GM12878 (cell line): ENCODE measurements at regions of chr5 and their contacts with region 1.

Region 1: GRCh38 chr5:171323806-171324633 is 15.0 kb downstream of the TLX3 start:
- DNase-seq: no peak
- ATAC-seq: no peak; the same call in 2 of the 3 replicates
- H3K4me3 ChIP-seq: no peak overlapping the region
- H3K27ac ChIP-seq: no peak overlapping the region
- H3K4me1 ChIP-seq: no peaks in the 10 kb centered on the region
- H3K27me3 ChIP-seq: peaks cover 0 to 7% of the 10 kb centered on the region in 2 experiments; a peak in 2 of 4 replicates
- CTCF ChIP-seq: no peak
- EP300 ChIP-seq: no peak
- POLR2A ChIP-seq: no peak
- RAD21 ChIP-seq: no peak

Region 2: GRCh38 chr5:171365351-171365750 is 41.3 kb after region 1 on chr5:
- CTCF ChIA-PET with region 1: no interaction called
- POLR2A ChIA-PET with region 1: no interaction called
- RAD21 ChIA-PET with region 1: no interaction called
- SMC1A ChIA-PET with region 1: no interaction called
- in situ Hi-C with region 1: no loop called
- intact Hi-C with region 1: loop called (anchors 1 kb)
- DNase-seq: no peak
- ATAC-seq: 0 out of 3 replicates have a peak, but pooled peaks have one; percentile 34
- H3K4me3 ChIP-seq: no peak overlapping the region
- H3K27ac ChIP-seq: no peak overlapping the region
- H3K4me1 ChIP-seq: peaks cover 15% of the 10 kb centered on the region
- H3K27me3 ChIP-seq: no peaks in the 10 kb centered on the region
- CTCF ChIP-seq: peak; percentile 24 to 47 (median 44); a peak in 5 of 6 replicates
- EP300 ChIP-seq: no peak
- POLR2A ChIP-seq: no peak
- RAD21 ChIP-seq: peak; percentile 35; the same call in 1 of the 2 replicates

Region 3: GRCh38 chr5:171387970-171388815 is 64.2 kb after region 1 on chr5:
- CTCF ChIA-PET with region 1: no interaction called
- POLR2A ChIA-PET with region 1: no interaction called
- RAD21 ChIA-PET with region 1: no interaction called
- SMC1A ChIA-PET with region 1: no interaction called
- in situ Hi-C with region 1: no loop called
- intact Hi-C with region 1: no loop called
- DNase-seq: peak; percentile 59
- ATAC-seq: peak; percentile 71
- H3K4me3 ChIP-seq: peak overlapping the region; percentile 92
- H3K27ac ChIP-seq: peak overlapping the region; percentile 87
- H3K4me1 ChIP-seq: peaks cover 5% of the 10 kb centered on the region
- H3K27me3 ChIP-seq: no peaks in the 10 kb centered on the region
- CTCF ChIP-seq: no peak
- EP300 ChIP-seq: 0 out of 4 replicates have a peak, but pooled peaks have one; percentile 24 to 44
- POLR2A ChIP-seq: peak; percentile 85
- RAD21 ChIP-seq: no peak